HEK293 (cell line): ENCODE measurements at regions of chr22 and their contacts with region 1.

Region 1: DNA sequence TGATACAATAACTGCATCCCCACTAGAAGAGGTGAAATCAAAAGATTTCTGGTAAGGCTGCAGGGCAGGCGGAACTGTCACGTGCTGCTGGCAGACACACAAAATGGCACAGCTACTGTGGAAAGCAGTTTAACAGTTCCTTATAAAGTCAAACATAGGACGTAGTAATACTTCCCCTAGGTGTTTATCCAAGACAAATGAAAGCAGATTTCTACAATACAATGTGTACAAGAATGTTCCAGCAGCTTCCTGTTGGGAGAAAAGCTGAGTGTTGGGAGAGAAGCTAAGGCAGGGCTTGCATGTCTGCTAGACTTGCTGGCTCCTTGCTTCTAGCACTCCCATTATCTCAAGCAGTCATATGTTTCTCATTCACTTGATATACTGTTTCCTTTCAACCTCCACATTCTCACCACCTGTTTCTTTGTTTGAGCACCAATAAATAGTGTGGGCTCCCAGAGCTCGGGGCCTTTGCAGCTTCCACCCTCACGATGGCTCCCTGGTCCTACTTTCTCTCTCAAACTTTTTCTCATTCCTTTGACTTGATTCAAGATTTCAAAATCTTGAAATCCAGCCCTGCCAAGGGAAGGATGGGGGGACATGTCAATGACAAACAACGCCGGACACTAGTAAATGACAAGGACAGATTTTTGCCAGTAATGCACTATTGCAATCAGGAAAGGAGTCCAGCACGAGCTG is 21.2 kb upstream of the IL17RA start:
- H3K4me3 ChIP-seq: no peak overlapping the region
- H3K27ac ChIP-seq: no peak overlapping the region
- H3K4me1 ChIP-seq: no peaks in the 10 kb centered on the region
- CTCF ChIP-seq: no peak

Region 2: GRCh38 chr22:16917144-16918003 is 146.2 kb before region 1 on chr22:
- CTCF ChIA-PET with region 1: interaction called, 106 read pairs
- POLR2A ChIA-PET with region 1: no interaction called
- H3K4me3 ChIP-seq: no peak overlapping the region
- H3K27ac ChIP-seq: no peak overlapping the region
- H3K4me1 ChIP-seq: no peaks in the 10 kb centered on the region
- CTCF ChIP-seq: 0 out of 2 replicates have a peak, but pooled peaks have one; percentile 40

Region 3: DNA sequence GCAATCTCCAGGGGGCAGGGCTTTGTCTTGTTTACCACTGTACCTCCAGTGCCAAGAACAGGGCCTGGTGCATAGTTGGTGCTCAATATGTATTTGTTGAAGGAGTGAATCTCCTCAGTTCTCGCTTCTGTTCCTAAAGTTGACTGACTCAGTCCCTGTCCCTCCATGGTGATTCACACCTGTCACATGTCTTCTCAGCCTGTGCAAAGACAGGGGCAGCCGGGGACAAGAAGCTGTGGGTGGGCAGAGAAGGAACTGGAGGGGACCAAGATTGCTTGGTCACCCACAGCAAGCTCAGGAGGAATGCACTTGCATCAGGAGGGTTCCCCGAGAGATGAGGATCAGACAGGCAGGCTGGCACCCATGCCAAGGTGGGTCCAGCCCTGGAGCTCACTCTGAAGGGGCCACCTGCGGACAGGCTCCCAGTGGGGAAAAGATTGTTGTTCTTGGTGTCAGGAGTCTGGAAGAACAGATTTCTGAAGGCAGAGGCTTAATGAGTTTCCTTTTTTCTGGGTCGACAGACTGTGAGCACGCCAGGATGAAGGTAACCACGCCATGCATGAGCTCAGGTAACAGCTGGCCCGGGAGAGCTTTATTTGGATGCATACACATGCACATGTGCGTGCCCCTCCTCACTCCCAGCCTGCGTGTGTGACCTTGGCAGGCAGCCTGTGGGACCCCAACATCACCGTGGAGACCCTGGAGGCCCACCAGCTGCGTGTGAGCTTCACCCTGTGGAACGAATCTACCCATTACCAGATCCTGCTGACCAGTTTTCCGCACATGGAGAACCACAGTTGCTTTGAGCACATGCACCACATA is 38.1 kb after region 1 on chr22:
- CTCF ChIA-PET with region 1: no interaction called
- POLR2A ChIA-PET with region 1: no interaction called
- H3K4me3 ChIP-seq: no peak overlapping the region
- H3K27ac ChIP-seq: no peak overlapping the region
- H3K4me1 ChIP-seq: no peaks in the 10 kb centered on the region
- CTCF ChIP-seq: no peak

Region 4: GRCh38 chr22:17234144-17234623 is 170.6 kb after region 1 on chr22:
- CTCF ChIA-PET with region 1: no interaction called
- POLR2A ChIA-PET with region 1: no interaction called
- H3K4me3 ChIP-seq: no peak overlapping the region
- H3K27ac ChIP-seq: no peak overlapping the region
- H3K4me1 ChIP-seq: no peaks in the 10 kb centered on the region
- CTCF ChIP-seq: no peak

Region 5: DNA sequence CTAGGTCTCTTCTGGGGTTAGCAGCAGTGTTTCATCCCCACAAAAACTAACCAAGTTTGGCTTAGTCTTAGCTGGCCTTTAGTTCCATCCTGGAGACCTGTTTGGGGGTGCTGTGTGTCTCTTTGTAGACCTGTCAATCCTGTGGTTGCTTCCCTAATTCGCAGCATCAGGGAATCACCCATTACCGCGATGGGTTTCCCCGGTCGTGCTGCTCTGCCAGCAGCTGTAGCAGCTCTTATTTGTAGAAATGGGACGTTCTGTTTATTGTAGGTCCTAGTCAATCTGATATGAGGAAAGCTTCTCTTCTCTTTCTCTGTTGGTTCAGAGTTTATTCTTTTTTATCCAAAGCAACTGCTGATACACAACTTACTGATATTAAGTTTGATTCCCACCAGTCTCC is 397.3 kb after region 1 on chr22:
- CTCF ChIA-PET with region 1: no interaction called
- POLR2A ChIA-PET with region 1: no interaction called
- H3K4me3 ChIP-seq: no peak overlapping the region
- H3K27ac ChIP-seq: no peak overlapping the region
- H3K4me1 ChIP-seq: 0 out of 2 replicates have a peak, but pooled peaks cover 2% of the 10 kb centered on the region
- CTCF ChIP-seq: no peak